AG04450 (cell line): ENCODE measurements at regions of chr2 and their contacts with region 1.

Region 1: DNA sequence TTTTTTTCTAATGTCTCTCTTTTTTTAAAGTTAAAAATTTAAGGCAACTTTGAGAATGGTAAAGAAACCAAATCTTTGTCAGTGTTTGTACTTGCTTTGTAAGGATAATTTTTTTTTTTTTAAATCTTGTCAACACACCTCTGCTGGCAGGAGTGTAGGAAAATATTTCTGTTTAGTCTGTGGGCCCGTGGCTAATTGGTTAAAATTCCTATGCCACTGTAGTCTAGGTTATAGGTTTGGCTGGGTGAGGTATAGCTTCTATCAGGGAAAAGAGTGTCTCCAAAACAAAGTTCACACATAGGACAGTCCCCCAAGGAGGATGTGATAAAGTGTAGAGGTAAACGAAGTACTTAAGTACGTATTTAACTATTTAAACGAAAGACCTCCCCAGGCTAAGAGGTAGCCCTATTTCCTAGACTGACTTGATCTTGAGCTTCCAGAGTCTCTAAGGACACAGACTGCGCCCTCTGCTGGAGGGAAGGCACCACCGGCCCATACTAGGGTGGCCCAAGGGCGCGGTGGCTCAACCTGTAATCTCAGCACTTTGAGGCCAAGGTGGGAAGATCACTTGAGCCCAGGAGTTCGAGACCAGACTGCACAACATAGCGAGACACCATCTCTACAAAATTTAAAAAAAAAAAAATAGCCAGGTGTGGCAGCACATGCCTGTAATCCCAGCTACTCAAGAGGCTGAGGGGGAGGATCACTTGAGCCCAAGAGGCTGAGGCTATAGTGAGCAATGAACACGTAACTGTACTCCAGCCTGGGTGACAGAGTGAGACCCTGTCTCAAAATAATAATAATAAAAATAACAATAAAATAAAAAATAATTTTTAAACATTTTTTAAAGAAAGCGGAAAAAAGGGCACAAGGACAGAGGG is 8.9 kb downstream of the TEX44 start:
- DNase-seq: peak; percentile 48
- H3K4me3 ChIP-seq: no peak overlapping the region
- H3K27ac ChIP-seq: no peak overlapping the region
- H3K27me3 ChIP-seq: no peaks in the 10 kb centered on the region
- CTCF ChIP-seq: peak; percentile 90

Region 2: GRCh38 chr2:231514103-231514950 is 87.3 kb before region 1 on chr2:
- CTCF ChIA-PET with region 1: interaction called, 15 read pairs
- POLR2A ChIA-PET with region 1: no interaction called
- DNase-seq: peak; percentile 89
- H3K4me3 ChIP-seq: peak overlapping the region; percentile 88
- H3K27ac ChIP-seq: peak overlapping the region; percentile 57
- H3K27me3 ChIP-seq: no peaks in the 10 kb centered on the region
- CTCF ChIP-seq: no peak

Region 3: DNA sequence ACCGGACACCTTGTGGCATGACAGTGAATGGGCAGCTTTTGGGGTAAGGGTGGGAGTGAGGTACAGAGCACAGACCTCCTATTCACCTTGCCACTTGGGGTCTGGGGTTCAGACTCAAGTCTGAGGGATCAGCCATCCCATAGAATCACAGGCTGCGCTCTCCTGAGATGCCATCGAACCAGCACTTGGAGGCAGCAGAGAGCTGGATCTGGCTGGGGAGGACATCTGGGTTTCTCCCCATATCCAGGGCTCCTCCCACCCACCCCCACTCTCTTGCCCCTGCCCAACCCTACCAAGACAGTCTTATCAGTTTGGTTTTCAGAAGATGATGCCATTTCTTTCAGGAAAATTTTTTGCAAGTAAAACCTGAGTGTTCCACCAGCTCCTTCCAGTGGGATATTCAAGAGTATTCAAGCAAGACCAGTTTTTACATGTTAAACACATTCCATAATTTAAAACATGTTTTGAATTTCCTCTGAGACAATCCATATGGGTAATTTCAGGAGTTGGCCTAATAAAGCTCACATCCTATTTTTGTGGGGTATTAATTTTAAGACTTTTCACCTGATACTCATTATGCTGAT is 38.1 kb before region 1 on chr2:
- CTCF ChIA-PET with region 1: interaction called, 149 read pairs
- POLR2A ChIA-PET with region 1: no interaction called
- DNase-seq: peak; percentile 18
- H3K4me3 ChIP-seq: no peak overlapping the region
- H3K27ac ChIP-seq: no peak overlapping the region
- H3K27me3 ChIP-seq: peaks cover 9% of the 10 kb centered on the region
- CTCF ChIP-seq: peak; percentile 77

Region 4: GRCh38 chr2:231583982-231584381 is 17.6 kb before region 1 on chr2:
- CTCF ChIA-PET with region 1: interaction called, 17 read pairs
- POLR2A ChIA-PET with region 1: no interaction called
- DNase-seq: no peak
- H3K4me3 ChIP-seq: no peak overlapping the region
- H3K27ac ChIP-seq: no peak overlapping the region
- H3K27me3 ChIP-seq: peaks cover 2% of the 10 kb centered on the region
- CTCF ChIP-seq: no peak

Region 5: DNA sequence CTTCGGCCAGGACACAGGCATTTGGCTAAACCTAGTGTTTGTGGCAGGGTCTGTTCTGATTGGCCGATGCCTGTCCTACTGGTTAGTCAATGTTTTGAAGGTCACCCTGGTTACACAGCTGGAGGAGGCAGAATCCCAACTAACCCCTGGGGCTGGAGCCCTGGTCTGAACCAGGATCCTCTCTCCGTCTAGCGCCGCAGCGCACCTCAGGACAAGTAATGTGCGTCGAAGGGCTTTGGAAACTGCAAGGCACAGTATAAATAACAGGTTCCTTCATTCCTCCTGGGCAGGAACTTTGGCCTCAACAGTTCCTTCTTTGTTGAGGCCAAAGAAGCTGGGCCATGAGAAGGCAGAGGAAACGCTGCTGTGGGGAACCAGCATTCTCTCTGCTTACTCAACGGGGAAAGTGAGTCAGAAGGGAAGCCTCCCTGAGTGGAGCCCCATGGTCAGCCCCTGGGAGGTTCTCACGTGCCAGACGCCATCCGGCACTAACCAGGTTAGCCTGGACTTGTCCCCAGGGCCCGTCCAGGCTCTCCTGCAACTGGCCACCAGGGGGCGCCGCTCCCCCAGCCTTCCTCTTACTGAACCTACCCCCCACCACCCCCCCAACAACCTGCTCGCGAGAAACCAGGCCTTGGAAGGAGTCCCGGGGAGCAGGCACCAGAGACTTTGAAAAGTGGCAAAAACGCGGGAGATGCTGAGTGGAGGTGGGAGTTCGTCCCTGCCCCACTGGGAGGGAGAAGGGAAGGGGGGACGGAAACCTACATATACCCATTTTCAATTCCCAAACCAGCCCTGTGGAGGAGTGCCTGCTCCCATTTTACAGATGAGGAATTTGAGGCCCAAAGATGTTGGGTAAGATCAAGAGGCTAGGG is 10.8 kb after region 1 on chr2:
- CTCF ChIA-PET with region 1: interaction called, 26 read pairs
- POLR2A ChIA-PET with region 1: interaction called, 3 read pairs
- DNase-seq: peak; percentile 84
- H3K4me3 ChIP-seq: no peak overlapping the region
- H3K27ac ChIP-seq: peak overlapping the region; percentile 96
- H3K27me3 ChIP-seq: no peaks in the 10 kb centered on the region
- CTCF ChIP-seq: peak; percentile 93

Region 6: GRCh38 chr2:231655897-231656296 is 54.3 kb after region 1 on chr2:
- CTCF ChIA-PET with region 1: no interaction called
- POLR2A ChIA-PET with region 1: no interaction called
- DNase-seq: no peak
- H3K4me3 ChIP-seq: no peak overlapping the region
- H3K27ac ChIP-seq: no peak overlapping the region
- H3K27me3 ChIP-seq: no peaks in the 10 kb centered on the region
- CTCF ChIP-seq: no peak

Region 7: DNA sequence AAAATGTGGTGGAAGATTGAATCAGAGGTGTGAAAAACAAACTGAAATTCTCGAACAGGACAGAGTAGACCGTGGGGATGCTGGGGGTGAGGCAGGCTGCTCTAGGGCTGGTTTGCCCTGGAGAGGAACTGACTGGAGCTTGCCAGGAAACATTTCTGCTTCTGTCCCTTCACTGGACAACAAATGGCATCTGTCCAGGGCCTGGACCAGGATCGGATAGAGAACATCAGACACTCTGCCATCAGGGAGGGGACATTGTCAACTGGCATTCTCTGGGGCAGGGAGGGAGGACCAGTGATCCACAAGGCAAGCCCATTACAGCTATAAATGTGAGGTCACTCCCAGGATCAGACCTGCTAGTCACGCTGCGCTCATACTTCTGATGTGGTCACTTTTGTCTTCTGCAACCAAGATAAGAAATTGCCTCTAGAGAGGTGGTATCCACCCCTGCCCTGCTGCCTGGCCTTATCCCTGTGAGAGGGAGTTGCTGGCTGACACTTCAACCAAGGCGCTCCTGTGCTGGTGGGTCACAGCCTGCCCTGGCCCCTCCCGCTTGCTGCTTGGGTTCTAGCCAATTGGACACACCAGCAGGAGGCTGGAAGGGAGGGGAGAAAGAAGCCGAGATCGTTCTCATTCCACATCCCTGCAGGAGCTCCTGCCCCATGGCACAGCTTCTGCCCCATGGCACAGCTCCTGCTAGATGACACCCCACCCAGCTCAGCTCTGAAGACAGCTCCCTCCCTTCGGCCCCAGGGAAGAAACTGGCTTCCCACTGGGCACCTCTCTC is 315.9 kb after region 1 on chr2:
- CTCF ChIA-PET with region 1: no interaction called
- POLR2A ChIA-PET with region 1: no interaction called
- DNase-seq: no peak
- H3K4me3 ChIP-seq: no peak overlapping the region
- H3K27ac ChIP-seq: no peak overlapping the region
- H3K27me3 ChIP-seq: peaks cover 43% of the 10 kb centered on the region
- CTCF ChIP-seq: no peak